ENCODE measurements at regions of chr14 and their contacts with region 1.

Region 1: DNA sequence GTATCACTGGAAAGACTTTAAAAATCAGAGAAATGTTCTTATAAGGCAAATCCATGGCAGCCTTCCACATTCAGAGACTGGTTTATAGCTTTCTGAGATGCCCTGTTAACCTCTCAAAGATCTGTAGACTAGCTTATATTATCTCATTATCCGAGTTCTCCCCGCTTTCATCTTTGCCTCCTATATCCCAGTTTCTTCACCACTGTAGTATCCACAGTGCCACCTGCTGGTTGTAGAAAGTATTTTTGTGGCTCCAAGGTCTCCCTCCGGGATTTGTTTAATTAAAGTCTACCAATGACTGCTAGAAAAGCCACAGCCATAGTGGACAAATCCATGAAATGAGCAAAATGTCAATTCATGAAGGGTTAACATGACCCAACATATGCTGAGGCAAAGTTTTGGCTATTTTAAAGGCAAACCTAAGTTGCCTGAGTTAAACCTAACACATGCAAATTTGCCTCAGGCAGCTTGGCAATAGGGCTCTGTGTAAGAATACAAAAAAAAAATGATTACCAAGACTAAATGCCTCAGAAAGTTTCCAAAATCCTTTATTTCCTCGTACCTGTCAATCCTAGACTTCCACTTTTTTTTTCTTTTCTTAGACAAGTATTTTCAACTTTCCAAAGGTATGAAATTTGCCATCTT is 218.8 kb upstream of the BMP4 start:
- DNase-seq: peak; percentile 73
- ATAC-seq: peak; percentile 83
- H3K4me3 ChIP-seq: no peak overlapping the region
- H3K27ac ChIP-seq: no peak overlapping the region
- H3K4me1 ChIP-seq: peaks cover 9% of the 10 kb centered on the region; the same call in 1 of the 2 replicates
- H3K27me3 ChIP-seq: peaks cover 8% of the 10 kb centered on the region
- CTCF ChIP-seq: peak; percentile 84
- POLR2A ChIP-seq: no peak
- RAD21 ChIP-seq: peak; percentile 81

Region 2: DNA sequence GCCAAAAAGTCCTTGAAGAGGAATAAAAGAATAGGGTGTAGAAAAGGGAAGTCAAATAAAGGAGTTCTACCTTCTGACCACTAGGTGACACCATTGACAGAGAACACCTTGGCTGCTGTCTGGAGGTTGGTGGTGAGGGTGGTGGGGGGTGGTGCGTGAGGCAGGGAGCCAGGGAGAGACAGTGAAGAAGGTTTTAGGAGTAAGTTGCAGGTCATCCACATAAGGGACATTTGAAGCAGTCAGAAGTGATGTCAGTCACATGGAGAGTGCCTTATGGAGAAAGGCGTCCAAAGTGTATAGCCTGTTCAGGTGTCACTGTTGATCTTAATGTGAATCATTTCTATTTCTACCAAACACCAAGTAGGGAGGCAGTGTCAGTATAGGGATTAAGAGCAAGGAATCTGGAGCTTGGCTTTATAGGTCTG is 743.0 kb before region 1 on chr14:
- CTCF ChIA-PET with region 1: interaction called, 7 read pairs
- POLR2A ChIA-PET with region 1: no interaction called
- dilution Hi-C with region 1: no loop called
- in situ Hi-C with region 1: no loop called
- intact Hi-C with region 1: loop called (anchors 2 kb)
- DNase-seq: peak; percentile 60
- ATAC-seq: peak; percentile 94
- H3K4me3 ChIP-seq: no peak overlapping the region
- H3K27ac ChIP-seq: peak overlapping the region; percentile 3; the same call in 1 of the 2 replicates
- H3K4me1 ChIP-seq: peaks cover 6% of the 10 kb centered on the region
- H3K27me3 ChIP-seq: no peaks in the 10 kb centered on the region
- CTCF ChIP-seq: peak; percentile 71
- POLR2A ChIP-seq: no peak
- RAD21 ChIP-seq: peak; percentile 83

Region 3: DNA sequence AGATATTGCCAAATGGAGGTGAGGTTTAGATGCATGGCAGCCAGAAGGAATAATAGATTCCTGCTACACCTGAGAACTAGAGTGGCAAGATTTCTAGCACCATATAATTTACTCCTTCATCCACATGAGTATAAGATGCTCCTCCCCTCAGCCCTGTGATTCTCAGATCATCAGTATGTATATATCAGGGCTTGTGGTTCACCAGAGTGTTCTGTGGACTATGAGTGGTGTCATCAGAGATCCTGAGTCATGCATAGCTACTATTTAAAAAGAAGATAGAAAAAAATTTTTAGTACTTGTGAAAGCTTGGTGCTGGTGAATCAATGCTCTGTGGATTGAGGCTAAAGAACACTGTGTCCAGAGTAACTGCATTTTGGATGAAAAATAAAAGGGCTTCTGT is 504.7 kb before region 1 on chr14:
- CTCF ChIA-PET with region 1: no interaction called
- POLR2A ChIA-PET with region 1: no interaction called
- dilution Hi-C with region 1: no loop called
- in situ Hi-C with region 1: no loop called
- intact Hi-C with region 1: loop called (anchors 5 kb)
- DNase-seq: peak; percentile 89
- ATAC-seq: peak; percentile 100
- H3K4me3 ChIP-seq: no peak overlapping the region
- H3K27ac ChIP-seq: no peak overlapping the region
- H3K4me1 ChIP-seq: peaks cover 4% of the 10 kb centered on the region; the same call in 1 of the 2 replicates
- H3K27me3 ChIP-seq: peaks cover 8% of the 10 kb centered on the region
- CTCF ChIP-seq: no peak
- POLR2A ChIP-seq: no peak
- RAD21 ChIP-seq: no peak

Region 4: GRCh38 chr14:53946404-53947096 is 228.9 kb before region 1 on chr14:
- CTCF ChIA-PET with region 1: no interaction called
- POLR2A ChIA-PET with region 1: interaction called, 31 read pairs
- dilution Hi-C with region 1: no loop called
- in situ Hi-C with region 1: no loop called
- intact Hi-C with region 1: no loop called
- DNase-seq: no peak
- ATAC-seq: no peak
- H3K4me3 ChIP-seq: no peak overlapping the region
- H3K27ac ChIP-seq: no peak overlapping the region
- H3K4me1 ChIP-seq: peaks cover 4% of the 10 kb centered on the region
- H3K27me3 ChIP-seq: no peaks in the 10 kb centered on the region; the same call in 1 of the 2 replicates
- CTCF ChIP-seq: no peak
- POLR2A ChIP-seq: no peak
- RAD21 ChIP-seq: no peak

Region 5: GRCh38 chr14:54025661-54026060 is 149.8 kb before region 1 on chr14:
- CTCF ChIA-PET with region 1: no interaction called
- POLR2A ChIA-PET with region 1: no interaction called
- dilution Hi-C with region 1: no loop called
- in situ Hi-C with region 1: no loop called
- intact Hi-C with region 1: loop called (anchors 10 kb)
- DNase-seq: peak; percentile 5
- ATAC-seq: peak; percentile 48; the same call in 1 of the 2 replicates
- H3K4me3 ChIP-seq: no peak overlapping the region
- H3K27ac ChIP-seq: no peak overlapping the region
- H3K4me1 ChIP-seq: no peaks in the 10 kb centered on the region
- H3K27me3 ChIP-seq: no peaks in the 10 kb centered on the region; the same call in 1 of the 2 replicates
- CTCF ChIP-seq: peak; percentile 48
- POLR2A ChIP-seq: no peak
- RAD21 ChIP-seq: peak; percentile 56

Region 6: DNA sequence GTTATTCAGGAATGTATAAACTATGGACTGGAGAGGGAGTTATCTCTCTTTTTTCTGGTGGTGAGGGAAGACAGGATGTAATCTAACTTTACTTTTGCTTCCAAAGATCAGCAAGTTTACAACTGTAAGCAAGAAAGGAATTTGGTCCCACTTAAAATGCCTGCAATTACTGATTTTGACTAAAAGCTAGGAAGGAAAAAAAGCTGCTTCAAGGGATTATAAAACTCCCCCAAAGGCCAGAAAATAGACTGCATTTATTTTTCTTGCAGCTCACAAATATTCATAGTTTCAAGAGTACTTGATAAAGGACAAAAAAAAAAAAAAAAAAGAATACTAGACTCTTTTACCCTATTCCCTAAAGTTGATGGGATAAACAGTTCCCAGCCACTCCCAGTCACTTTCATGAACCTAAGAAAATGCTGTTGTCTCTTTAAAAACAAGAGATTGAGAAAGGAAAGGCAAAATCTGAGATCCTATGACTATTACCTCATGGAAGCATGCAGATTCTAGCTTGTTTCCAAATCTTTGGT is 90.1 kb before region 1 on chr14:
- CTCF ChIA-PET with region 1: interaction called, 6 read pairs
- POLR2A ChIA-PET with region 1: no interaction called
- dilution Hi-C with region 1: no loop called
- in situ Hi-C with region 1: no loop called
- intact Hi-C with region 1: loop called (anchors 1 kb)
- DNase-seq: peak; percentile 34
- ATAC-seq: peak; percentile 89
- H3K4me3 ChIP-seq: no peak overlapping the region
- H3K27ac ChIP-seq: peak overlapping the region; percentile 66; the same call in 1 of the 2 replicates
- H3K4me1 ChIP-seq: peaks cover 8% of the 10 kb centered on the region; the same call in 1 of the 2 replicates
- H3K27me3 ChIP-seq: no peaks in the 10 kb centered on the region; the same call in 1 of the 2 replicates
- CTCF ChIP-seq: no peak
- POLR2A ChIP-seq: no peak
- RAD21 ChIP-seq: no peak

Region 7: DNA sequence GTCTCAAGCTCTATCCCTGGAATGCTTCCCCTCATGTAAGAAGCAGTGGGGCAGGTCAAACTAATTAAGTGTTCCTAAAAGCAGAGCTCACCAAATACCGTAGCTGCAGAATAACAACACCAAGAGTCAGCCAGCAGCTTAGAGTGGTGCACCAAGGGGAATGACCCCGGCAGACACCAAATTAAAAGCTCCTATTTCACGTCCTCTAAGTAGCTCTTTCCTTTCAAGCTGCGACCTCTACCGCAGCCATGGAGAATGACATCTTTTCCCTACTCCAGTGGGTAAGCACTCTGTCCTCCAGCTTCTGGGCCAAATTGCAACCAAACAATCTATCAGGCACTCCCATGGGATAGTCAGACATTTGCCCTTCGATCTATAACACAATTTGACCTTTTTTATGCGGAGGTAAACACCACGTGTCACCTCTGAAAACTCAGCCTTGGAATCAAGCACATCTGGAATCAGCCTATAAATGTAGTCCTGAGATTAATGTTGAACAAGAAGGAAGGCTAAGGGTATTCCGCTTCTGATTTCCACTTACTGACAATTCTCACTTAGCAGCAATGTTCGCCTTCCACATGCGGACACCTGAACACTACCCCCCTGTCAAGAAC is 153.8 kb after region 1 on chr14:
- CTCF ChIA-PET with region 1: interaction called, 5 read pairs
- POLR2A ChIA-PET with region 1: no interaction called
- dilution Hi-C with region 1: no loop called
- in situ Hi-C with region 1: no loop called
- intact Hi-C with region 1: loop called (anchors 1 kb)
- DNase-seq: peak; percentile 61
- ATAC-seq: peak; percentile 99
- H3K4me3 ChIP-seq: no peak overlapping the region
- H3K27ac ChIP-seq: no peak overlapping the region
- H3K4me1 ChIP-seq: no peaks in the 10 kb centered on the region
- H3K27me3 ChIP-seq: peaks cover 12% of the 10 kb centered on the region
- CTCF ChIP-seq: peak; percentile 79
- POLR2A ChIP-seq: no peak
- RAD21 ChIP-seq: peak; percentile 86